ENCODE measurements at regions of chr20 and their contacts with region 1.

Region 1: DNA sequence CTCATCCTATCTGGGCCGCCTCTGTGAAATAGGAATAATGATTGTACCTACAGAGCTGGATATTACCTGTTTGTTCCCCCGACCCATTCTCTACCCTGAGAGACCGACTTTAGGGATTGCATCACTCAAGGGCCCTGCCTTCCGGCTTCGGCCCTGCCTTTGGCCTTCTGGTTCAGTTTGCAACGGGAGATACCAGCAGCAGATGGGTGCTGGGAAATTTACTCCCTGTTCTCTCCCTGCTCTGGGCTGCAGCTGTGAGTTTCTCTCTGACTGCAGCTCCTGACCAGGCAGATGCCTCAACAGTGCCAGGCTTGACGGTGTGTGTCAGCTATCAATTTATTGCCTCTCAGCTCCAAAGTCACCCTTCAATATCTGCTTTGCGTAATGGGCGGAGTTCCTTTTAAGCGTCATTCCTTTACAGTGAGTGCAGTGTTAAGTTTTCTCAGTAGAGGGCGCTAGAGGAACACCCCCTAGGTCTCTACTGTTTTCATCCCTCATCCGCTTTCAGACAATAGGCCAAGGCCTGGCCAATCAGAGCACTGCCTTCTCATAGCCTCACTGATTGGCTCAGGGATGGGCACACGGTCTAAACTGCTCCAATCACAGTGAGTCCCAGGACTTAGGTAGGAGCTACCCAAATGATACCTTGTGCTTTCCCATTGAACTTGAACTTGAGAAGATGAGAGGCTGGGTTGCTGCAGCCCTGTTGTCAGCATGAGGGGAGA is 30.0 kb downstream of the KCNG1 start:
- DNase-seq: peak; percentile 66 to 82
- H3K4me3 ChIP-seq: peak overlapping the region in 3 of 4 experiments; percentile 8 to 40 (median 16); a peak in 4 of 8 replicates
- H3K27ac ChIP-seq: peak overlapping the region; percentile 44; the same call in 1 of the 2 replicates
- H3K4me1 ChIP-seq: peaks cover 3 to 19% (median 8%) of the 10 kb centered on the region in 4 experiments; a peak in 6 of 7 replicates
- H3K27me3 ChIP-seq: peaks cover 0 to 2% (median 0%) of the 10 kb centered on the region in 4 experiments; a peak in 1 of 7 replicates
- CTCF ChIP-seq: peak in 2 of 3 experiments; percentile 73 to 96; a peak in 3 of 4 replicates
- EP300 ChIP-seq: no peak
- POLR2A ChIP-seq: no peak
- RAD21 ChIP-seq: peak; percentile 89

Region 2: DNA sequence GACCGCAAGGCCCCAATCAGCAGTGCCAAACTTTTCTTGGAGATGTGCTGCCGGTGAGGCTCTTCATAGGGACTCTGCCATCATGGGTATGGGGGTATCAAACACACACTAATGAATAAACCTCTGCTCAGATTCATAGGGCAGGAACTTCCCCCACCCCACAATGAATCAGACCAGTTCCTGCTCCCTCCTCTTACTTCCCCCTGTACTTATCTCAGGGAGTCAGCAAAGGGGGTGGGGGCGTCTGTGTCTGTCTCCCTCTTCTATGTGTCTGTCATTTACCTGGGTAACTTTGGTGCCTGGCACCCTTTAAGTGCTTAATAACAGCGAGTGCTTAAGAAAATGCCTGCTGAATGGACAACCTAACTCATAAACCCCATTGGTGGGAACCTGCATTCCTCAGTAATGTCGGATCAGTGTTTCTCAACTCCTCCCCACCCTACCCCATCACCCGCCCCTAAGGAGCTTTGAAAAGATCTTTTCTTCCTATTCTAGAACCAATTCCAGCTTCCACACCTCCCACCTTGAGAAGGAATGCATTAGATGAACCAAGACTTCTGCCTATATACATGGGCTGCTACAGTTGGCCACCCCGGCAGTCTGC is 28.6 kb after region 1 on chr20:
- CTCF ChIA-PET with region 1: interaction called, 28 read pairs
- POLR2A ChIA-PET with region 1: interaction called, 8 read pairs
- DNase-seq: no peak
- H3K4me3 ChIP-seq: peak overlapping the region in 2 of 4 experiments; percentile 68 to 75; a peak in 3 of 8 replicates
- H3K27ac ChIP-seq: no peak overlapping the region
- H3K4me1 ChIP-seq: peaks cover 13 to 36% (median 16%) of the 10 kb centered on the region in 4 experiments
- H3K27me3 ChIP-seq: peaks cover 11 to 36% (median 30%) of the 10 kb centered on the region in 4 experiments
- CTCF ChIP-seq: no peak
- EP300 ChIP-seq: no peak
- POLR2A ChIP-seq: no peak
- RAD21 ChIP-seq: no peak

Region 3: GRCh38 chr20:51300104-51300503 is 307.2 kb after region 1 on chr20:
- CTCF ChIA-PET with region 1: interaction called, 245 read pairs
- POLR2A ChIA-PET with region 1: interaction called, 30 read pairs
- DNase-seq: no peak
- H3K4me3 ChIP-seq: no peak overlapping the region
- H3K27ac ChIP-seq: no peak overlapping the region
- H3K4me1 ChIP-seq: peaks cover 2 to 11% (median 7%) of the 10 kb centered on the region in 4 experiments; a peak in 5 of 7 replicates
- H3K27me3 ChIP-seq: no peaks in the 10 kb centered on the region; a peak in 1 of 7 replicates
- CTCF ChIP-seq: no peak
- EP300 ChIP-seq: no peak
- POLR2A ChIP-seq: no peak
- RAD21 ChIP-seq: no peak

Region 4: DNA sequence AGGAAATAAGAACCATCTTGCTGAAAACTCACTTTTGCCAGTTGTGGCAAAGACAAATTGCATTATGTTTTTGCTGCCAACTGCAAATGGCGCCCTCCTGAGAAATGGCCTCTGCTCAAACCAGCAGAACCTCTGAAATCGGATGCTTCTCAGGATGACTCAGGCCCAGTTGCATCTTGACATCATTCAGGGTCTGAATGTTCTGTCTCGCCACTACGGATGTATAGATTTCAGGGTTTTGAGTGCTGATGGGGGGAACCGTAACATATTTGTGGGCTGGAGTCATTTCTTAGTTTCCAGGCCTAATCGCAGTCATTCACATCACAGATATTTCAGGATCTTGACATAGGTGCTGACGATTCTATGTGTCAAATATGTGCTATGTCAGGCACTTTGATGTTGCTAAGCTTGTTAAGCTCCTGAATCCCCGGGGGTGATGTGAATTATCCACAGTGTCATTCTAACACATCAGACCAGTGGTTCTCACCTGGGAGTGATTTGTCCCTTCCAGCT is 342.5 kb after region 1 on chr20:
- CTCF ChIA-PET with region 1: interaction called, 13 read pairs
- POLR2A ChIA-PET with region 1: no interaction called
- DNase-seq: no peak
- H3K4me3 ChIP-seq: no peak overlapping the region
- H3K27ac ChIP-seq: no peak overlapping the region
- H3K4me1 ChIP-seq: no peaks in the 10 kb centered on the region
- H3K27me3 ChIP-seq: no peaks in the 10 kb centered on the region
- CTCF ChIP-seq: no peak
- EP300 ChIP-seq: no peak
- POLR2A ChIP-seq: no peak
- RAD21 ChIP-seq: no peak

Measured in H1 (cell line).